ENCODE measurements at regions of chr5 and their contacts with region 1.

Region 1: DNA sequence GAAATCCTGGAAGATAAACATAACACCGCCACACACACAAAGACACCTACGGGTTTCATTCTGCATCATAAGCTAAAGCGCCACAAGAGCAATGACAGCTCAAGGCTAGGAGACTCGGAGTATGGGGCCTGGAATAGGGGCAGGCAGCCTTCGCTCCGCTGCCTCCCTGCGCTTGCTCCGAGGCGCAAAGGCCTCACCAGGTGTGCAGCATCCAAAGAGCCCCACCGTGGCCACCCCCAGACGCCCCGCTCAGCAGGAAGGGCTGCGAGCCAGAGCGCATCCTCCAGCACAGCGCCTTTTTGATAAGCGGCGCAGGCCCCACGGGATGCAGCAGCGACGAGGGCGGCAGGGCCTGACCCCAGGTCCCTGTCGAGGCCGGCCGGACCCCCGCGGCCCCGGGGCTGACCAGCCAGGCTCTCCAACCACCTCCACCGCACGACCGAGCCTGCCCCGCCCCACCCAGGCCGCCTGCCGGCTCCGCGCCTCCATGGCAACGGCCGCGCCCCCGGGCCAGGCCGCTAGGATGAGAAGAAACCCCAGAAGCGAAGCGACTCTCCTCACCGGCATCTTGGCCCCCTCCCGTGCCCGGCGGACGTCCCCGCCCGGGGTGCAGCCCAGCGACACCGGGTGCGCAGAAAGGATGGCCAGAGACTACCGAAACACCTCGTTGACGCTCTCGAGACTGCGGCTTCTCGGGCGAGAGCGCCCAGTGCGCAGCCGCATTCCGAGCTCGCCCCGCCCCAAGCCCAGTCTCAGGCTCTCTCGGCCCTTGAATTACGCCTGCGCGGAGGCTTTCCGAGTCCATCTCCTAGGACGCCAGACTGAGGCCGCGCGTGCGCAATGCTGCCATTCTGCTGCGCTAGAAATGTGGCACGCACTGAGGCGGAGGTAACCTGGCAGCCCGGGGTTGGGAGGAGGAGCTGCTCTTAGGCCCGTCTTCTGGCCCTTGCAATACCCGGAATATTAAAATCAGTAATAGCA is at the start of gene KIF3A:
- DNase-seq: peak; percentile 88 to 93
- ATAC-seq: peak; percentile 99
- H3K4me3 ChIP-seq: peak within 1 kb of the TSS; percentile 74 to 89 (median 86)
- H3K27ac ChIP-seq: peak within 1 kb of the TSS; percentile 57 to 65 (median 58)
- H3K4me1 ChIP-seq: peaks cover 5 to 7% of the 10 kb centered on the region in 2 donors
- H3K27me3 ChIP-seq: peaks cover 0 to under 1% (median 0%) of the 10 kb centered on the region in 3 donors
- CTCF ChIP-seq: peak in 2 of 5 experiments; percentile 38 to 40
- POLR2A ChIP-seq: no peak
- total RNA-seq, gene KIF3A: 2.5 to 4.2 (median 3.4) TPM

Region 2: DNA sequence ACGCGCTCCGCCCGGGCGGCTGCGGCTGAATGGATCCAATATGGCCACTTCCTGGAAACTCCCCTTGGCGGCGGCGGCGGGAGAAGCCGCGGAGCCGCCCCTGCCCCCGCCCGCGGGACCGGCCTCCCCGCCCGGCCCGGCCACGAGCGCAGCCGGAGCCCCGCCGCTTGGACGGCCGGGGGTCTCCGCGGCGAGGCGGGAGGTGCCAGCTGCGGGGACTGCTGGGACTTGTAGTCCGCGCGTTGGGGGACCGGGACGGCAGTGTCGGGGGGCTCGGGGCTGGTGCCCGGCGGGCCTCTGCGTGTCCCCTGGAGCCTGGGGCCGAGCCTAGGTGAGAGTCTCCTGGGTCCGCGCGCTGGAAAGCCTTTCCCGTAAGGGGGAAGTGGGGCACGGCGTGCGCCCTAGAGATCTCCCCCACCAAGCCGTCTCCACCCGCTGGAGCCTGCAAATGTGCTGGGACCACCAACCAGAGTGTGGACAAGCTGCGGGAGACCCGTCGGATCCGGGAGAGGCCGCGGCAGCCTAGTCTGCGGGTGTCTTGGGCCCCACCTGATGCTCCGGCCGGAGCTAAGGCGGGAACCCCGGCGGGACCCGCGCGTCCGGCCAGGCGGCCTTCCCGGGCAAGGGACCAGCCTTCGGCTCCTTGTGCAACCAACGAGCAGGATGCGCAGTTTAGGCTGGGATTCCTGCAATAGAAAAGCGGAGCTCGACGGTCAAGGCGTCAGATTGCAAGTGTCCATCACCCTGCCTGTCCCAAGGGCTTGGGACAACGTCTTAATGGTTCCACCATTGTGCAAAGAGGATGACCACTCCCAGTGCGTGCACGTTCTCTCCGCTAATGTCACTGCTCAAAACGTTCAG is 40.3 kb after region 1 on chr5 and contains the start of gene SEPTIN8:
- in situ Hi-C with region 1: no loop called
- intact Hi-C with region 1: loop called (anchors 5 kb)
- DNase-seq: peak in 1 of 2 donors; percentile 34
- ATAC-seq: peak; percentile 55 to 62
- H3K4me3 ChIP-seq: peak within 1 kb of the TSS; percentile 73 to 90 (median 78)
- H3K27ac ChIP-seq: peak within 1 kb of the TSS; percentile 65 to 75 (median 72)
- H3K4me1 ChIP-seq: peaks cover 3 to 14% of the 10 kb centered on the region in 2 donors
- H3K27me3 ChIP-seq: peaks cover 0 to 7% (median 2%) of the 10 kb centered on the region in 3 donors
- CTCF ChIP-seq: peak in 1 of 5 experiments; percentile 7
- POLR2A ChIP-seq: no peak
- total RNA-seq, gene SEPTIN8: 5.2 to 7.9 (median 6.8) TPM

Measured in gastrocnemius medialis (tissue), 4 donors.